ENCODE measurements at regions of chr5 and their contacts with region 1.

Region 1: DNA sequence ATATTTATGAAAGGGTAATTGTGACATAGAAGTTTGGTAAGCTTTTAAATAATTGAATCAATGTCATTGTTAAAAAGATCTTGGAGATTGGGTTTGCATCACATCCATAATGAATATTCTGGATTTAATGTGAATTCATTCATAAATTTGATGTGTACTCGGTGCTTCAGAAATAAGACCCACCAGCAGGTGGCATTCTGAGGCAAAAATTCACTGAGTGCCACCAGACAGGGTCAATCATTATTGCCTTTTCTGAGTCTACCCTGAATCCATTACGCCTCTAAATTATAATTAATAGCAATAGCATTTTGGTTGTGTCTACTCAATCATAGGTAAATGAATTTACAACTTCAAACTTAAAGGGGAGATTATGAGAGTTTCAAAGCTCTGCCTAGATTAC is 1.0 kb downstream of the TRPC7 start:
- DNase-seq: no peak
- ATAC-seq: no peak
- H3K4me3 ChIP-seq: no peak overlapping the region
- H3K4me3 Mint-ChIP-seq: no peak overlapping the region
- H3K27ac ChIP-seq: no peak overlapping the region
- H3K27ac Mint-ChIP-seq: no peak overlapping the region
- H3K4me1 ChIP-seq: no peaks in the 10 kb centered on the region
- H3K4me1 Mint-ChIP-seq: no peaks in the 10 kb centered on the region
- H3K27me3 ChIP-seq: no peaks in the 10 kb centered on the region
- H3K27me3 Mint-ChIP-seq: peaks cover 10% of the 10 kb centered on the region
- CTCF ChIP-seq: no peak

Region 2: GRCh38 chr5:135386886-135387628 is 977.2 kb before region 1 on chr5:
- CTCF ChIA-PET with region 1: no interaction called
- POLR2A ChIA-PET with region 1: no interaction called
- intact Hi-C with region 1: no loop called
- DNase-seq: peak in 1 of 9 experiments; percentile 23
- ATAC-seq: no peak
- H3K4me3 ChIP-seq: no peak overlapping the region
- H3K4me3 Mint-ChIP-seq: no peak overlapping the region
- H3K27ac ChIP-seq: no peak overlapping the region
- H3K27ac Mint-ChIP-seq: peak overlapping the region; percentile 2
- H3K4me1 ChIP-seq: peaks cover 8% of the 10 kb centered on the region
- H3K4me1 Mint-ChIP-seq: peaks cover 61% of the 10 kb centered on the region
- H3K27me3 ChIP-seq: no peaks in the 10 kb centered on the region
- H3K27me3 Mint-ChIP-seq: no peaks in the 10 kb centered on the region
- CTCF ChIP-seq: no peak

Region 3: GRCh38 chr5:136382071-136382470 is 17.8 kb after region 1 on chr5:
- CTCF ChIA-PET with region 1: interaction called, 3 read pairs
- POLR2A ChIA-PET with region 1: no interaction called
- intact Hi-C with region 1: loop called in 1 of 2 experiments (anchors 1 kb)
- DNase-seq: no peak
- ATAC-seq: no peak
- H3K4me3 ChIP-seq: no peak overlapping the region
- H3K4me3 Mint-ChIP-seq: no peak overlapping the region
- H3K27ac ChIP-seq: no peak overlapping the region
- H3K27ac Mint-ChIP-seq: no peak overlapping the region
- H3K4me1 ChIP-seq: no peaks in the 10 kb centered on the region
- H3K4me1 Mint-ChIP-seq: no peaks in the 10 kb centered on the region
- H3K27me3 ChIP-seq: no peaks in the 10 kb centered on the region
- H3K27me3 Mint-ChIP-seq: no peaks in the 10 kb centered on the region
- CTCF ChIP-seq: no peak

Region 4: GRCh38 chr5:136703706-136704105 is 339.4 kb after region 1 on chr5:
- CTCF ChIA-PET with region 1: no interaction called
- POLR2A ChIA-PET with region 1: no interaction called
- intact Hi-C with region 1: no loop called
- DNase-seq: no peak
- ATAC-seq: no peak
- H3K4me3 ChIP-seq: no peak overlapping the region
- H3K4me3 Mint-ChIP-seq: no peak overlapping the region
- H3K27ac ChIP-seq: no peak overlapping the region
- H3K27ac Mint-ChIP-seq: no peak overlapping the region
- H3K4me1 ChIP-seq: no peaks in the 10 kb centered on the region
- H3K4me1 Mint-ChIP-seq: no peaks in the 10 kb centered on the region
- H3K27me3 ChIP-seq: no peaks in the 10 kb centered on the region
- H3K27me3 Mint-ChIP-seq: peaks cover 2% of the 10 kb centered on the region
- CTCF ChIP-seq: no peak

Region 5: DNA sequence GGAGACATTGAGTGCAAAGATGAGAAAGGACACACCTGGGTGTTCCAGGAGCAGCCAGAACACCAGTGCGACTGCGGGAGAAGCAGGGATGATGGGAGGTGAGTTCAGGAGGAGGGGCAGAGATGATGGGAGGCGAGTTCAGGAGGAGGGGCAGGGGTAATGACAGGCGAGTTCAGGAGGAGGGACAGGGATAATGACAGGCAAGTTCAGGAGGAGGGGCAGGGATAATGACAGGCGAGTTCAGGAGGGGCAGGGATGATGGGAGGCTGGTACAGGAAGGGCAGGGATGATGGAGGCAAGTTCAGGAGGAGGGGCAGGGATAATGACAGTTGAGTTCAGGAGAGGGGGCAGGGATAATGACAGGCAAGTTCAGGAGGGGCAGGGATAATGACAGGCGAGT is 1152.0 kb after region 1 on chr5:
- CTCF ChIA-PET with region 1: no interaction called
- POLR2A ChIA-PET with region 1: no interaction called
- intact Hi-C with region 1: no loop called
- DNase-seq: no peak
- ATAC-seq: no peak
- H3K4me3 ChIP-seq: no peak overlapping the region
- H3K4me3 Mint-ChIP-seq: no peak overlapping the region
- H3K27ac ChIP-seq: no peak overlapping the region
- H3K27ac Mint-ChIP-seq: no peak overlapping the region
- H3K4me1 ChIP-seq: no peaks in the 10 kb centered on the region
- H3K4me1 Mint-ChIP-seq: no peaks in the 10 kb centered on the region
- H3K27me3 ChIP-seq: peaks cover 0 to 5% of the 10 kb centered on the region in 2 experiments
- H3K27me3 Mint-ChIP-seq: peaks cover 31% of the 10 kb centered on the region
- CTCF ChIP-seq: no peak